B cell (primary cell): ENCODE measurements at regions of chr1 and their contacts with region 1.

Region 1: DNA sequence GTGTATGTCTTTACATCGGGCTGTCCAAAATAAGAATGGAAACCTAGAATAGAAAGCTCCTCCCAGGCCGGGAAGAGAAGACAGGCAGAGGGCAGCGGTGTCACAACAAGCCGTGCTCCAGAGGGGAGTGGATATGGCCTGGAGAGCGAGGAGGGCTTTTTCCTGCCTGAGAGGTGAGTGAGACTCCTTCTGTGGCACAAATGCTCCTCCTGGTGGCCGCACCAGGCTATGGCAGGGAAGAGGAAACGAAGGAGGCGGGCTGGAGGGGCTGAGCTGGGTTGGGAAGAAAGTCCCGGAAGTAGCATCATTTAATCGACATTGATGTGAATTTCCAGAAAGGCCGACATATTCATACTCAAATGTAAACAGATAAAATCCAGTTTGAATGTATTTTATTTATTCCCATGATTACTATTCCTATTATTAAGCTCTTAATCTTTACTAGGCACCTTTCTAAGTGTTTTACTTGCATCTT is 54.7 kb downstream of the MEF2D start:
- DNase-seq: peak; percentile 83
- ATAC-seq: peak; percentile 97
- H3K4me3 ChIP-seq: no peak overlapping the region
- H3K4me3 Mint-ChIP-seq: no peak overlapping the region
- H3K27ac ChIP-seq: no peak overlapping the region
- H3K27ac Mint-ChIP-seq: no peak overlapping the region
- H3K4me1 ChIP-seq: peaks cover 4 to 10% of the 10 kb centered on the region in 2 donors
- H3K4me1 Mint-ChIP-seq: no peaks in the 10 kb centered on the region
- H3K27me3 ChIP-seq: peaks cover 0 to 64% (median 41%) of the 10 kb centered on the region in 4 experiments
- H3K27me3 Mint-ChIP-seq: peaks cover 61% of the 10 kb centered on the region
- CTCF ChIP-seq: peak; percentile 92

Region 2: DNA sequence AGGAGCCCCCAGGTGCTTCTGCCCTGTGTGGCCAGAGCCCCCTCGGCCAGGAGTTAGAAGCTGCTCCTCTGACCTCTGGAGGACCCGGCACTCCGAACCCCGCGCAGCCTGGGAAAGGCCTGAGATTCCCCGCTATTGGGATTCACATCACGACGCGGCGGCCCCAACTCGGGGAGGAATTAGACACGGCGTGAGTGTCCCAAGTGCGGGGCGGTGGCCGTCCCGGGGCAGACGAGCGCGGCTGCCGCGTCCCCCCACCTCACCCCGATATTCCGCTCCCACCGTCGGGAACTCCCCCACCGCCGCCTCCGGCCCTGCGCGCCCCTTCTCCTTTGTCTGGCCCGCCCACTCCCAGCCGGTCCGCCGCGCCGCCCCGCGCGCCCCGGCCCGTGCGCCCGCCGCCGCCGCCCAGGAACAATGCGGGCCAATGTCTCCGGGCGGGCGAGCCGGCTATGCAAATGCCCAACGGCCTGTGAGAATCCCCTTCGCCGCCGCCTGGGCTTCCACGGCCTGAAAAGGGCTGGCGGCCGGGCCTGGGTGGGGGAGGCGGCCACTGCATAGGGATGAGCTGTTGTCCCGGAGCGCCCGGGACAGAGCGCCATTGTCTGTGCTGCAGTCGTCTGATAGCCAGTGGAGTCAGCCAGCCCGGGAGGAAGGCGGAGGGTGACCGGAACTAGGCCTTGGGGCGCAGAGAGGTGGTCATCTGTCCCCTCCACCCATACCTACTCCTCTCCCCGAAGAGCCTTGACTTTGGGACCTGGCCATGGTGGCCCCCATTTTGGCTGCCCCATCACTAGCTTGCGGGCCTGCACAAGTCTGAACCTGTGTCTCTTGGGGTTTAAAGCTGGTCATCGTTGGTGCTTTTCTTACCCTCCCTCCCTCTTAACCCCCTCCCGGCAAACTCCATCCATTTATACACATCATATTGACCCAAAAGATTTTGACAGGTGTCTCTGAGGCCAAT is 57.4 kb before region 1 on chr1:
- CTCF ChIA-PET with region 1: interaction called, 445 read pairs
- POLR2A ChIA-PET with region 1: interaction called, 3 read pairs
- intact Hi-C with region 1: loop called (anchors 1 kb)
- DNase-seq: peak; percentile 33
- ATAC-seq: no peak
- H3K4me3 ChIP-seq: no peak overlapping the region
- H3K4me3 Mint-ChIP-seq: no peak overlapping the region
- H3K27ac ChIP-seq: no peak overlapping the region
- H3K27ac Mint-ChIP-seq: no peak overlapping the region
- H3K4me1 ChIP-seq: peaks cover 4 to 19% of the 10 kb centered on the region in 2 donors
- H3K4me1 Mint-ChIP-seq: peaks cover 8% of the 10 kb centered on the region
- H3K27me3 ChIP-seq: peaks cover 0 to 53% (median 15%) of the 10 kb centered on the region in 4 experiments
- H3K27me3 Mint-ChIP-seq: peaks cover 28% of the 10 kb centered on the region
- CTCF ChIP-seq: no peak

Region 3: GRCh38 chr1:156429313-156430060 is 16.3 kb before region 1 on chr1:
- CTCF ChIA-PET with region 1: interaction called, 22 read pairs
- POLR2A ChIA-PET with region 1: no interaction called
- intact Hi-C with region 1: no loop called
- DNase-seq: no peak
- ATAC-seq: no peak
- H3K4me3 ChIP-seq: no peak overlapping the region
- H3K4me3 Mint-ChIP-seq: no peak overlapping the region
- H3K27ac ChIP-seq: no peak overlapping the region
- H3K27ac Mint-ChIP-seq: no peak overlapping the region
- H3K4me1 ChIP-seq: no peaks in the 10 kb centered on the region
- H3K4me1 Mint-ChIP-seq: no peaks in the 10 kb centered on the region
- H3K27me3 ChIP-seq: peaks cover 0 to 90% (median 53%) of the 10 kb centered on the region in 4 experiments
- H3K27me3 Mint-ChIP-seq: peaks cover 82% of the 10 kb centered on the region
- CTCF ChIP-seq: no peak

Region 4: DNA sequence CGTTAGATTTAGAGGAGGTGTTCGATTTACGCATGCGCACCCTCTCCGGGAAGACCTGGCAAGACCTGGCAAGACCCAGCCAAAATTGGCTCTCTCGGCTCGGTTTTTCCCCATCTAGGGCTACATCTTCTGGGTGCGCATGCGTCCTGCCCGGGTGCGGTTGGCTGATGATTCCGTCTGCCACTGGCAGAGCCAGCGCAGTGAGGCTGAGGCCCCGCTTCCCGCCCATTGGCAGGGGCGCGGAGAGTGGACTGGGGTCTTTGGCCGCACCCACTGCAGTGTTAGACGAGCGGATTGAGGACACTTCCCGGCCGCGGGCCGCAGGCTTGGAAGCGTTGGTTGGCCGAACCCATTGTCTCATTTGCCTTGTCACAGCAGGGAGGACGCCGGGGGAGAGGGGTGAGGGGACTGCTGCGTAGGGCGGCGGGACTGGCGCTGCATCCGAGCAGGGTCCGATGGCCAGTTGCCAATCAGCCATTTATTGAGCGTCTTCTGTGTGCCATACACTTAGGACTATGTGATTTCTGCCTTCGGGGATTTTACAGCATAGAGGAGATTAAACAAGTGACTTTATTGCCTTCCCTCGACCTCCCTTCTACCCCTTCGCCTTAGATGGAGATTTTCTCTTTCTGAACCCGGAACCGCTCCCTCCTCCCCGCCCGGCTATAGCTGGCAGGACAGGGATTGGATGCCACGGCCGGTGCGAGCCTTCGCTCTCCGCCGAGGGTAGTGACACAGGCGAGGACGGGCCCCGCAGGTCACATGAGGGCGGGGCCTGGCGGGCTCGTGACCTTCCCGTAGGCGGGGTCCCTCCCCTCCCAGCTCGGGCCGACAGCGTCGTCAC is 11.0 kb after region 1 on chr1:
- CTCF ChIA-PET with region 1: interaction called, 21 read pairs
- POLR2A ChIA-PET with region 1: interaction called, 3 read pairs
- intact Hi-C with region 1: no loop called
- DNase-seq: peak; percentile 98
- ATAC-seq: peak; percentile 85
- H3K4me3 ChIP-seq: peak overlapping the region; percentile 41 to 87 (median 84)
- H3K4me3 Mint-ChIP-seq: peak overlapping the region; percentile 96
- H3K27ac ChIP-seq: peak overlapping the region; percentile 97 to 100
- H3K27ac Mint-ChIP-seq: peak overlapping the region; percentile 98
- H3K4me1 ChIP-seq: peaks cover 3 to 15% of the 10 kb centered on the region in 2 donors
- H3K4me1 Mint-ChIP-seq: peaks cover 17% of the 10 kb centered on the region
- H3K27me3 ChIP-seq: no peaks in the 10 kb centered on the region
- H3K27me3 Mint-ChIP-seq: no peaks in the 10 kb centered on the region
- CTCF ChIP-seq: no peak

Region 5: DNA sequence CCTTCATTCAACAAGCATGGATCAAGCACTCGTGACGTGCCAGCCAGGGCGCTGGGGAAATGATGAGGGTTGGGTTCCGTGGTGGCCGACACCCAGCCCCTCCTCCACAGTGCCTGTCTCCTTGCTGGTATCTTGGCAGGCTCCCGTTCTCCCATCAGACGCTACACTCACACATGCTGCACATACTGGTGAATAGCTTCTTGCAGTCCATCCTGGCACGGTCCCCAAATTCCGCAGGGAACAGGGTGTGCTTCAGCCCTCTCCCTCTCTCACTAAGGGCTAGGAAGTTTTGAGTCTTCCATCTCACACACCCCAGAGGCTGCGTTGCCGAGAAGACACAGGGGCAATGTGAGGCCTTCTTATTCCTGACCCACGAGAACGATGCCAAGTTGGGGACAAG is 64.9 kb after region 1 on chr1:
- CTCF ChIA-PET with region 1: no interaction called
- POLR2A ChIA-PET with region 1: no interaction called
- intact Hi-C with region 1: no loop called
- DNase-seq: no peak
- ATAC-seq: no peak
- H3K4me3 ChIP-seq: no peak overlapping the region
- H3K4me3 Mint-ChIP-seq: no peak overlapping the region
- H3K27ac ChIP-seq: no peak overlapping the region
- H3K27ac Mint-ChIP-seq: no peak overlapping the region
- H3K4me1 ChIP-seq: peaks cover 6 to 20% of the 10 kb centered on the region in 2 donors
- H3K4me1 Mint-ChIP-seq: peaks cover 26% of the 10 kb centered on the region
- H3K27me3 ChIP-seq: no peaks in the 10 kb centered on the region
- H3K27me3 Mint-ChIP-seq: no peaks in the 10 kb centered on the region
- CTCF ChIP-seq: no peak

Region 6: DNA sequence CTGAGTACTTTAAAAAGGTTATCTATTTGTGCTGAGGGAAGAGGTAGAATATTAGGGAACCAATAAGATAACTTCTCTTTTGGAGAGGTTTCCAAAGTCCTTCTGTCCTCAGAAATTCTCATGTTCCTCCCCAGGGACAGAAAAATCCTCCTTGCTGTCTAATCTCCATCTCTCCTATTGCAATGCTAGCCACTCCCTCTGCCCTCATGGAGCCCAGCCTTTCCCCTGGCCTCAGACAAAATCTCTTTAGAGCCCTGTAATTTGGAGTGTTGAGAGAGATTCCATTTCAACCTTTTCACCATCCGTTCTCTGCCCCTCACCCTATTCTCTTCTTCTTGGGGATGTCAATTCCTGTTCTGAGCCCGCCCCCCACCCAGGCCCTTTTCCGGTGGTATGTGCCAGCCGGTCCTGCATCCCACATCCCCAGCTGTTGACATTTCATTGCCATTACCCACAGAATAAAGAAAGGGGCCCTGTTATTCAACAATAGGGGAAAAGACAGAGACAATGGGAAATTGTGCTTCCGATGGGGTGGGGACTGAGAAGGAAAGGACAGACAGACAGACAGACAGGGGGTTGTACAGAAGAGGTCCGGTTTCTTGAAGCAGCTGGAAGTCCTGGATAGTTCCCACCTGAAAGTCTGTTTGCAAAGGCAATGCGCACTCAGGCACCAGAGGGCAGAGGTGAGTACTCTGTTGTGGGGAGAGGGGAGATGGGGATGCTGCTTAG is 173.2 kb after region 1 on chr1 and contains the start of gene HAPLN2:
- CTCF ChIA-PET with region 1: interaction called, 15 read pairs
- POLR2A ChIA-PET with region 1: no interaction called
- intact Hi-C with region 1: no loop called
- DNase-seq: peak; percentile 39
- ATAC-seq: peak; percentile 49
- H3K4me3 ChIP-seq: no peak within 1 kb of the TSS
- H3K4me3 Mint-ChIP-seq: no peak within 1 kb of the TSS
- H3K27ac ChIP-seq: no peak within 1 kb of the TSS
- H3K27ac Mint-ChIP-seq: no peak within 1 kb of the TSS
- H3K4me1 ChIP-seq: peaks cover 4 to 6% of the 10 kb centered on the region in 2 donors
- H3K4me1 Mint-ChIP-seq: peaks cover 4% of the 10 kb centered on the region
- H3K27me3 ChIP-seq: peaks cover 0 to 66% (median 24%) of the 10 kb centered on the region in 4 experiments
- H3K27me3 Mint-ChIP-seq: peaks cover 65% of the 10 kb centered on the region
- CTCF ChIP-seq: peak; percentile 33
- total RNA-seq, gene HAPLN2: 0.36 TPM in 1 of 2 replicates, not detected in the other